Calu3 (cell line): ENCODE measurements at regions of chr12 and their contacts with region 1.

Region 1: DNA sequence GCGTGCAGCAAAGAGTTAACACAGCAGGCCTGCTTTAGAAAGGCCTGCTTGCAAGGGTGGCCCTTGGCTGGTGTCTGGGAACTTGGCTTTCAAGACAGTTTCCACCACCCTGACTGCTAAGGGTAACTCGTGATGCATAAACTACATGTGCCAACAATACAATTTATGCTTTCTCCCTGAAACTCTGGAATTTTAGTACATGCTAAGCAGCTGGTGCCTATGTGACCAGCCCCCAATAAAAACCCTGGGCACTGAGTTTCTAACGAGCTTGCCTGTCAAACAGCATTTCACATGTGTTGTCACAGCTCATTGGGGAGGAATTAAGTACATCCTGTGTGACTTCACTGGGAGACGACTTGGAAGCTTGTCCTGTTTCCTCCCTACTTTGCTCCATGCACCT is 133.1 kb downstream of the SLC5A8 start:
- DNase-seq: no peak
- H3K4me3 Mint-ChIP-seq: no peak overlapping the region
- H3K27ac Mint-ChIP-seq: no peak overlapping the region
- H3K4me1 Mint-ChIP-seq: no peaks in the 10 kb centered on the region
- H3K27me3 Mint-ChIP-seq: no peaks in the 10 kb centered on the region
- CTCF ChIP-seq: no peak

Region 2: GRCh38 chr12:99137124-99137855 is 1939.6 kb before region 1 on chr12:
- CTCF ChIA-PET with region 1: no interaction called
- intact Hi-C with region 1: no loop called
- DNase-seq: no peak
- H3K4me3 Mint-ChIP-seq: no peak overlapping the region
- H3K27ac Mint-ChIP-seq: no peak overlapping the region
- H3K4me1 Mint-ChIP-seq: no peaks in the 10 kb centered on the region
- H3K27me3 Mint-ChIP-seq: peaks cover 15% of the 10 kb centered on the region
- CTCF ChIP-seq: no peak

Region 3: GRCh38 chr12:100842156-100842555 is 234.8 kb before region 1 on chr12:
- CTCF ChIA-PET with region 1: interaction called, 13 read pairs
- intact Hi-C with region 1: no loop called
- DNase-seq: no peak
- H3K4me3 Mint-ChIP-seq: no peak overlapping the region
- H3K27ac Mint-ChIP-seq: no peak overlapping the region
- H3K4me1 Mint-ChIP-seq: peaks cover 14% of the 10 kb centered on the region
- H3K27me3 Mint-ChIP-seq: no peaks in the 10 kb centered on the region
- CTCF ChIP-seq: no peak

Region 4: GRCh38 chr12:101186291-101186690 is 109.4 kb after region 1 on chr12:
- CTCF ChIA-PET with region 1: no interaction called
- intact Hi-C with region 1: no loop called
- DNase-seq: no peak
- H3K4me3 Mint-ChIP-seq: no peak overlapping the region
- H3K27ac Mint-ChIP-seq: no peak overlapping the region
- H3K4me1 Mint-ChIP-seq: no peaks in the 10 kb centered on the region
- H3K27me3 Mint-ChIP-seq: no peaks in the 10 kb centered on the region
- CTCF ChIP-seq: no peak

Region 5: DNA sequence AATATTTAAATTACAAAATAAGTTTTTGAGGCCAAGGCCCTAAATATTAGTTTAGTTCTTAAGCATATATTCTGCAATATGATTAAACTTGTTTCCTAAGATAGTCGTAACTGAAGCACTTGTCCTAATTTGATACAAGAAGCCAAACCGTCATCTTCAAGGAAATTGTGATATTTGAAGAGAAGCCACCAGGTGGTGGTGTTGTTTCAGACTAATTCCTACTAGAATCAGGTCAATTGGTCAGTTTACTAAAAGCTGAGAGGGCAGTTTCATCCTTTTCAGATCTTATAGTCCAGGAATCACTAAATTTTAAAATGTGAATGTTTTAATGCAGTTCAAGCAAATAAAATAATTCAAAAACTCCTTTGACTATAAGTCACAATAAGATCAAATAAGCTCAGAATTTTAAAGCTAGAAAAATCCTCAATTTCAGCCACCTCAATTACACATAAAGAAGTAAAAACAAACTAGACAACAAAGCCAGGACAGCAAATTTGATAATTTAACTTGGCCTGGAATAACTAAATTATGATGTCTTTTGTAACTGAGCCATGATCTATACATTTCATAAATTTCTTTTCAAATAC is 337.7 kb after region 1 on chr12:
- CTCF ChIA-PET with region 1: no interaction called
- intact Hi-C with region 1: no loop called
- DNase-seq: peak; percentile 71
- H3K4me3 Mint-ChIP-seq: no peak overlapping the region
- H3K27ac Mint-ChIP-seq: no peak overlapping the region
- H3K4me1 Mint-ChIP-seq: no peaks in the 10 kb centered on the region
- H3K27me3 Mint-ChIP-seq: peaks cover 9% of the 10 kb centered on the region
- CTCF ChIP-seq: peak; percentile 45